ENCODE measurements at regions of chr5 and their contacts with region 1.

Region 1: DNA sequence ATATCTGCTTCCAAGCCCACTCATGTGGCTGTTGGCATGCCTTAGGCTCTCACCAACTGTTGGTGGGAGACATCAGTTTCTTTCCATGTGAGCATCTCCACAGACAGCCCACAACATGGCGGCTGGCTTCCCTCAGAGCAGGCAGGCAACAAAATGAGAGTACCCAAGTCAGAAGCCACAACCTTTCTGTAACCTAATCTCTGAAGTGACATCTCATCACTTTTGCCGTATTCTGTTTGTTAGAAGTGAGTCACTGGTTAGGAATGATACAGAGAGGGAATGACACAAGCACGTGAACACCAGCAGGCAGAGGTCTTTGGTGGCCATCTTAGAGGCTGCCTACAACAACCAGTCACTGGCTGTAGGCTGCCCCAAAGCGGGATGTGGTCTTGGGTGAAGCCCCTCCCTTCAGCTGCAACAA is 88.6 kb upstream of the RASGRF2 start:
- DNase-seq: no peak
- H3K4me3 Mint-ChIP-seq: no peak overlapping the region
- H3K27ac Mint-ChIP-seq: peak overlapping the region; percentile 55
- H3K4me1 Mint-ChIP-seq: peaks cover 34% of the 10 kb centered on the region
- H3K27me3 Mint-ChIP-seq: no peaks in the 10 kb centered on the region

Region 2: GRCh38 chr5:81020478-81021174 is 149.1 kb after region 1 on chr5:
- intact Hi-C with region 1: loop called (anchors 1 kb)
- DNase-seq: no peak
- H3K4me3 Mint-ChIP-seq: no peak overlapping the region
- H3K27ac Mint-ChIP-seq: no peak overlapping the region
- H3K4me1 Mint-ChIP-seq: peaks cover 61% of the 10 kb centered on the region
- H3K27me3 Mint-ChIP-seq: no peaks in the 10 kb centered on the region

Measured in activated T-helper 1 cell treated with anti-CD3 and anti-CD28 coated beads, Interleukin-12 subunit alpha, Interleukin-12 subunit beta, Interleukin-2, Interleukin-4 antibody, amounts not matched to agents 30 ng/mL and 10 ng/mL and 1 ng/mL, durations not matched to agents 14 hours and 24 hours and 36 hours (primary cell).